Prostate gland (tissue), 2 donors: ENCODE measurements at regions of chr12 and their contacts with region 1.

Region 1: DNA sequence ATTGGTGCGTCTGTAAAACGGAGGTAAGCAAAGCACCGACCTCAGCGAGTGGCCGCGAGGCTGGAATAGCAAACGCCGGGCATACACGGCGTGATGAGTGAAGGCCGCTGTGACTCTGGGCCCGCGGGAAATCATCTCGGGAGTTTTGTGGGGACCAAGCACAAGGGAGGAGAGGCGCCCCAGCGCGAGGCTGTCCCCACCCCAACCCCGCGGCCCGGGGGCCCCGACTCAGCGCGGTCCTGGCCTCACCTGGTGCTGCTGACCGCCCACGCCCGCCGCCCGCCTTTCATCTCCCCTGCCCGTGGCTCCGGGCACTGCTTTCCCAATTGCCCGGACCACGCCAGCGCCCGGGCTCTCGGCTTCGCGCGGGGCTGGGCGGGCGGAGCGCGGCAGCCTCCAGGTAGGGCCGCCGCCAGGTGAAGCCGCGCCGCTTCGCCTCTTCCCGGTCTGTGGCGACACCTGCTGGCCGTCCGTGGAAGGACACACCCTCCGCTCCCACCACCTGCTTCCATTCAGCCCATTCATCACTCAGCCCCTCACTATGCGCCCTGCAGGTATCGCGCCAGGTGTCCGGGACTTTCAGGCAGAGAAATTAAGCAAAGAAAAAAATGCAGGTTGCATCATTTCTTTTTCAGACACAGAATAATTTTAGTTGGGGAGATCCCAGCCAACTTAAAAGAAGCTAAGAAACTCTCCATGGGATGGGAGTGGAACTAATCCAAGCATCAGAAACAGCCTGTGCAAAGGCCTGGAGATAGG is 360.4 kb downstream of the MED13L start:
- DNase-seq: peak; percentile 74
- H3K4me3 ChIP-seq: peak overlapping the region; percentile 39 to 41
- H3K27ac ChIP-seq: peak overlapping the region; percentile 69 to 74
- H3K4me1 ChIP-seq: no peaks in the 10 kb centered on the region
- H3K27me3 ChIP-seq: no peaks in the 10 kb centered on the region
- CTCF ChIP-seq: peak; percentile 99
- POLR2A ChIP-seq: no peak

Region 2: GRCh38 chr12:114625294-114625851 is 1291.7 kb before region 1 on chr12:
- intact Hi-C with region 1: loop called (anchors 5 kb)
- DNase-seq: peak; percentile 73
- H3K4me3 ChIP-seq: no peak overlapping the region
- H3K27ac ChIP-seq: peak overlapping the region; percentile 20 to 64
- H3K4me1 ChIP-seq: no peaks in the 10 kb centered on the region
- H3K27me3 ChIP-seq: no peaks in the 10 kb centered on the region
- CTCF ChIP-seq: peak; percentile 55 to 89 (median 79)
- POLR2A ChIP-seq: no peak

Region 3: DNA sequence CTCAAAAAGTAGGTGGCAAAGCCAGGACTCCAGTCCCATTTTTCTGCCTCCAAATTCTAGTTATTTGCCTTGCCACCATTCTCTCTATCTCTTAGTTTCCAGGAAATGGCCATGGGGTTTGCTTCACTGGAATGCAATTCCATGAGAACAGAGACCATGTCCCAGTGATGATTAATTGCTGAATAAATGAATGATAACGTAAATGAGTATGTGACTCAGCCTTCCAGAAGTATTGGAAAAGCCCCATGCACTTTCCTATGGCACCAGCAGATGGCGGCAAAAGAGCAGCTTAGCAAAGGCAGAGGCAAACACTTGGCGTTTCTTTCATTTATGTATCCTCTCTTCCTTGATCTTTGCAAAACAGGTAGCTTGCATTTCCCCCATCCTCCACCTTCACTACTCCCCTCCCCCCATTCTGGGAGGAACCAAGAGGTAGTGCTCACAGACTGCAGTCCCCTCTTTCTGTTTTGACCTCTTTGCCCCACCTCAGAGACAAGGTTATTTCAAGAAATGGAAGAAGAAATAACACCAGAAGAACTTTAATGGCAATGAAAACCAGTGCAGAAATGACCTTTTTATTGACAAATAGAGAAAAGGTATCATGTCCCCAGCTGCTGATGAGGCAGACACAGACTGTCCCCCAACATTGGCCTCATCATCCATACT is 1254.4 kb before region 1 on chr12:
- intact Hi-C with region 1: loop called (anchors 2 kb)
- DNase-seq: peak; percentile 96
- H3K4me3 ChIP-seq: no peak overlapping the region
- H3K27ac ChIP-seq: peak overlapping the region; percentile 88 to 98
- H3K4me1 ChIP-seq: no peaks in the 10 kb centered on the region
- H3K27me3 ChIP-seq: no peaks in the 10 kb centered on the region
- CTCF ChIP-seq: peak; percentile 90 to 99 (median 95)
- POLR2A ChIP-seq: no peak

Region 4: GRCh38 chr12:115528466-115528865 is 388.6 kb before region 1 on chr12:
- intact Hi-C with region 1: no loop called
- DNase-seq: no peak
- H3K4me3 ChIP-seq: no peak overlapping the region
- H3K27ac ChIP-seq: no peak overlapping the region
- H3K4me1 ChIP-seq: no peaks in the 10 kb centered on the region
- H3K27me3 ChIP-seq: no peaks in the 10 kb centered on the region
- CTCF ChIP-seq: no peak
- POLR2A ChIP-seq: no peak

Region 5: DNA sequence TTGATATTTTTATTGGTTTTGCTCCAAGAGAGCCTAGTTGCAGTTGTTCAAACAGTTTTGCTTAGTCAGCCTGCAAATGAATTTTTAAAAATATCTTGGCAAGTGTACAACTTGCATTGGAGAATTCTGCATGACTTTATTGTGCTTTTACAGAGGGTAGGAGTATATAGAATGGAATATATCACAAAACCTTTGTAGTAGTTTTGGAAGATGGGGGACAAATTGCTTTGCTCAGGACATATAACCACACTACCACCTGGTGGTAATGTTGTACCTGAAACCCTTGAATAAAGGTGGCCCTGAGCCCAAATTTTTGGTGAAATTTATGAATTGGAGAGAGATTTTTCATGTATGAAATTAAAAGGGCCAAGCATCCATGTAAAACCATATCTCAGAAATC is 284.8 kb before region 1 on chr12:
- intact Hi-C with region 1: loop called (anchors 5 kb)
- DNase-seq: peak; percentile 11
- H3K4me3 ChIP-seq: no peak overlapping the region
- H3K27ac ChIP-seq: no peak overlapping the region
- H3K4me1 ChIP-seq: no peaks in the 10 kb centered on the region
- H3K27me3 ChIP-seq: no peaks in the 10 kb centered on the region
- CTCF ChIP-seq: peak in 3 of 4 experiments; percentile 36 to 61 (median 61)
- POLR2A ChIP-seq: no peak

Region 6: GRCh38 chr12:115722181-115722580 is 194.9 kb before region 1 on chr12:
- intact Hi-C with region 1: no loop called
- DNase-seq: no peak
- H3K4me3 ChIP-seq: no peak overlapping the region
- H3K27ac ChIP-seq: no peak overlapping the region
- H3K4me1 ChIP-seq: no peaks in the 10 kb centered on the region
- H3K27me3 ChIP-seq: no peaks in the 10 kb centered on the region
- CTCF ChIP-seq: no peak
- POLR2A ChIP-seq: no peak